Left lung (tissue), 14 donors: ENCODE measurements at regions of chr3 and their contacts with region 1.

Region 1: DNA sequence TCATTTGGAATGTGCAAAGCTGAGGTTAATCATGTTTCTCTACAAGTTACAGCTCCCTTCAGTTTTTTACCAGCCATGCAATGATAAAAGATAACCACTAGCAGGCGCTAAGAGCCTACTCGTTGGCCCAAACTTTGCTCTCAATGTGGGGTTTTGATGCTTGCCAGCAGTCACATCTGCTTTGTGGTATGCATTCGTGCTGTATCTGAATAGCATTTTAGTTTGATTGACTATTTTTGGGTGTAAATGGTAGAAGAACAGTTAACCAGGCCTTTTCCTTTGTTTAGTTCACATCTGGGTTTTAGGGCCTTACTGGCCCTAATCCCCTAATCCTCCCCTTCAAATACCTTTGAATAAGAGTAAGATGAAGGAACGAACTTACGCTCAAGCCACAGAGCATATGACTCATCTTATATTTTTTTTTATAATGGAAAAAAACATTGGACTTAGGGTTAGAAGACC is 4.4 kb upstream of the CLDN11 start:
- DNase-seq: peak in 2 of 4 donors; percentile 68 to 77
- ATAC-seq: peak; percentile 82
- H3K4me3 ChIP-seq: no peak overlapping the region
- H3K27ac ChIP-seq: no peak overlapping the region
- H3K4me1 ChIP-seq: peaks cover 6 to 11% of the 10 kb centered on the region in 2 donors
- H3K27me3 ChIP-seq: peaks cover 5 to 24% of the 10 kb centered on the region in 2 donors
- CTCF ChIP-seq: peak; percentile 72 to 89

Region 2: DNA sequence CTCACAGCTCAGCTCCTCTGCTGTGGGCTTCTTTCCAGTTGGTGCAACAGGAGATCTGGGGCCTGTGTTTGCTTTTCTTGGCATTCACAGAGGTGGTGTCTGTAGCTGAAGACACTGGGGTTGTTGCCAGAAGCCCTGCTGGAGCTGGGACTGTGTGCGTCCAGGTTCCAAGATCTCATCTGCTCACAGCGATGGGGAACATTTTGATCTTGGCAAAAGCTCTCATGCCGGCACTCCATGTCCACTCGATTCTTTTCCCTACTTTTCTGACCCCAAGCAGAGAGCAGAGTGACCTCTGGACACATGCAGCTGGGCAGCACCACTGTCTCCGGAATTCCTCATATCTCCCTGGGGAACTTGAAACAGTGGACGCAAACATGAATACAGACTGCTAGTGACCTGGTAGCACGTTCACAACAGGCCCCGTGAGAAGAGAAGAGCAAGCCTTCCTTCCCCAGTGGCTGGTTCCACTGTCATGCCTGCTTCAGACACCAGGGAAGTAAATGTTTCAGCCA is 714.6 kb before region 1 on chr3:
- intact Hi-C with region 1: no loop called
- DNase-seq: peak in 2 of 4 donors; percentile 23 to 32
- ATAC-seq: no peak
- H3K4me3 ChIP-seq: no peak overlapping the region
- H3K27ac ChIP-seq: no peak overlapping the region
- H3K4me1 ChIP-seq: no peaks in the 10 kb centered on the region
- H3K27me3 ChIP-seq: no peaks in the 10 kb centered on the region
- CTCF ChIP-seq: no peak

Region 3: DNA sequence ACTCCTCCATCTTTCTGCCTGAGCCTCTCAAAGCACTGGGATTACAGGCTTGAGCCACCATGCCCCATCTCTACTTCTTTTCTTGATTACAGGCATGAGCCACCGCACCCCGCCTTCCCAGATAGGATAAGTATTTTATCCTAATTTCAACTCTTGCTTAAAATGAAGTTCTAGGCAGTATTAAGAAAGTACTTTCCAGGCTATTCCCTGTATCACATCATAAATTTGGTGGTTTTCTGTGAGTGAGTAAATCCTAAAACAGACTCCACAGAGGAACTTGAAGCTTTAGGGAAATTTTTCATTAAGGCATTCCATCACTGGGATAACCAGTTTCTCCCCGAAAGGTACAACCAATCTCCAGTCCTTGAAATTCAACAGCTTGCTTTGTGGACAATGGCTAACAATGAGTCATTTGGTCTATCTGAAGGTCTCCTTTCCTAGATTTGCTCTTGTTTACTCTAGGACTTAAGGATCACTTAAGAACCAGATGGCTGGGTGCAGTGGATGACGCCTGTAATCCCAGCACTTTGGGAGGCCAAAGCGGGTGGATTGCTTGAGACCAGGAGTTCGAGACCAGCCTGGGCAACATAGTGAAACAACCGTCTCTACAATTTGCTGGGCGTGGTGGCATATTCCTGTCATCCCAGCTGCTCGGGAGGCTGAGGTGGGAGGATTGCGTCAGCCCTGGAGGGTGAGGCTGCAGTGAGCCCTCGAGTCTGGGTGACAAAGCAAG is 106.4 kb before region 1 on chr3:
- intact Hi-C with region 1: loop called in 1 of 2 experiments (anchors 5 kb)
- DNase-seq: peak in 2 of 4 donors; percentile 44 to 52
- ATAC-seq: peak; percentile 85
- H3K4me3 ChIP-seq: no peak overlapping the region
- H3K27ac ChIP-seq: peak overlapping the region in 1 of 2 donors; percentile 37
- H3K4me1 ChIP-seq: peaks cover 0 to 5% of the 10 kb centered on the region in 2 donors
- H3K27me3 ChIP-seq: no peaks in the 10 kb centered on the region
- CTCF ChIP-seq: no peak